ENCODE measurements at regions of chr17 and their contacts with region 1.

Region 1: DNA sequence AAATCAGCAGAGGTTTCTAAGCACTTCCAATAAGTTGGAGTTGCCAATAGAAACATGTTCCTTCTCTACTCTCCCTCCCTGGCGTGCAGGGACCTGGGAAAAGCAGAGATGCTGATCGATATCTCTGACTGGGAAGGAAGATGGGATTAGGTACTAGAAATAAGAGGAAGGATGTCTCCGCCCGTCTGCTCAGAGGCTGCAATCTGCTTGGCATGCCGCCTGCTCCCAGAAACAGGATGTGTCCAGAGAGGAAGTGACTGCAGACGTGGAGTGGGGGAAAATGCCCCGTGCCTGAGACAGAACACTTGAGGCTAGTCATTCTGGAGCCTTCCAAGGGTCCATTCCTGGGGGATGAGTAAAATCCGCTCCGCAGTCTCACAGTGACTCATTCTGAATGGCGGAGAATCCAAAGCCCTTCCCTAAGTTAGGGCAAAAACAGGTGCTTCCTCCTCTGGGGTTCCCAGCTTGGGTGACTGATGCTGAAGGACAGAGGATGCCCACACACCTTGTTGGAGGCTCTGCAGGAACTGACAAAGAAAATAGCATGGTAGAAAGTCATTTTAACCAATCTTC is 45.0 kb upstream of the SMURF2 start:
- DNase-seq: peak; percentile 100
- H3K4me3 ChIP-seq: no peak overlapping the region
- H3K27ac ChIP-seq: peak overlapping the region; percentile 99
- H3K4me1 ChIP-seq: peaks cover 44% of the 10 kb centered on the region
- H3K27me3 ChIP-seq: no peaks in the 10 kb centered on the region
- CTCF ChIP-seq: no peak
- POLR2A ChIP-seq: peak; percentile 62

Region 2: DNA sequence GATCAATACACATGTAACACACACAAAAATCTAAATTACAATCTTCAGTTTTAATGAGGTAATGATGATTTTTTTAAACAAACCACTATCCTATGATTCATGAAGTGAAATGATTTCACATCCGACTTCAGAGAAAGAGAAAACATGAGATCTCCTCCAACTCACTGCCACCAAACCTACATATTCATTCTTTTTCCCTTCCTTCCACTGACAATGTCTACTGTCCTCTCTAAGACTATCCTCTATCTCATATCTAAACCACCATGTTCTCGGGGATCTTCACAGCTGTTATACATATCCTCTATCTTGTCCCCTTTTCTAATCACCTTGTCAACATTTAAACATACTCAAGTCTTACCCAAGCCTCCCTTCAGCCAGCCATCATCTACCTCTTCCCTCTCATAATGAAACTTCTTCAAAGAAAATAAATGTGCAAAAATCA is 98.5 kb before region 1 on chr17:
- CTCF ChIA-PET with region 1: no interaction called
- POLR2A ChIA-PET with region 1: no interaction called
- dilution Hi-C with region 1: no loop called
- intact Hi-C with region 1: no loop called
- DNase-seq: peak; percentile 55
- H3K4me3 ChIP-seq: no peak overlapping the region
- H3K27ac ChIP-seq: peak overlapping the region; percentile 34
- H3K4me1 ChIP-seq: peaks cover 13% of the 10 kb centered on the region
- H3K27me3 ChIP-seq: no peaks in the 10 kb centered on the region
- CTCF ChIP-seq: no peak
- POLR2A ChIP-seq: peak; percentile 34

Region 3: GRCh38 chr17:64622931-64623654 is 84.0 kb before region 1 on chr17:
- CTCF ChIA-PET with region 1: no interaction called
- POLR2A ChIA-PET with region 1: no interaction called
- dilution Hi-C with region 1: no loop called
- intact Hi-C with region 1: loop called (anchors 1 kb)
- DNase-seq: peak; percentile 97
- H3K4me3 ChIP-seq: no peak overlapping the region
- H3K27ac ChIP-seq: peak overlapping the region; percentile 88
- H3K4me1 ChIP-seq: peaks cover 82% of the 10 kb centered on the region
- H3K27me3 ChIP-seq: no peaks in the 10 kb centered on the region
- CTCF ChIP-seq: no peak
- POLR2A ChIP-seq: no peak

Region 4: DNA sequence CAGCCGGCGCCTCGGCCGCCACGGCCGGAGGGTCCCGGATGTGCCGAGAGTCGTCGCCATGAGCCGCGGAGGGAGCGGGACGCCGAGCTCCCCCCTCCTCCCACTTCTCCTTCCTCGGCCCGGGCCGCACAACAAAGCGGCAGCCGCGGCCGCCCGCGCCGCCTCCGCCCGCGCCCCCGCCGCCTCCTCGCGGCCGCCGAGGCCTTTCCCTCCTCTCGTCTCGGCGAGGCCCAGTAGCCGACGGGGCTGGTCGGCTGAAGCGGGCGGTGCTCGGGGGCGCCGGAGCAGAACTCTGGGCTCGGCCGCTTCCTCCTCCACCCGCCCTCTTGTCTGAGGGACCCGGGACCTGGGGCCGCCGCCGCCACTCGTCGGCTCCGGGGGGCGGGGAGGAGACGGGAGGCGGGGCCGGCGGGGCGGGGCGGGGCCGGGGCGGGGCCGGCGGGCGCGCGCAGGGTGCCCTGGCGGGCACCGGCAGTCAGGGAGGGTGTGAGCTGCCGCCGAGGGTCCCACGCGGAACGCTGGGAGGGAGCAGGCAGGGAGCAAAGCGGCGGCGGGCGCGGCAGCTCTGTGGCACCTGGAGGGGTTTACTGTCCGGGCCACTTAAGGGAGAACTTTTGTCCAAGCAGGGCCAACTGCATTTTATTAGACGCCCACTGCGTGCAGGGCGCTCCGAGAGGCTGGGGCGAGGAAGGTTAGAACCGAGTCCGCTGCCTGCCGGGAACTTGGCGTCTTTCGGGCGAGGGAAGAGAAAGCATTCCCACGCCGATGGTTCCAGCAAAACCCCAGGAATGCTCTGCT is 44.9 kb before region 1 on chr17 and contains the start of gene SMURF2:
- CTCF ChIA-PET with region 1: interaction called, 15 read pairs
- POLR2A ChIA-PET with region 1: interaction called, 10 read pairs
- dilution Hi-C with region 1: no loop called
- intact Hi-C with region 1: loop called (anchors 1 kb)
- DNase-seq: peak; percentile 68
- H3K4me3 ChIP-seq: peak within 1 kb of the TSS; percentile 92 to 97 (median 95)
- H3K27ac ChIP-seq: peak within 1 kb of the TSS; percentile 86
- H3K4me1 ChIP-seq: peaks cover 29% of the 10 kb centered on the region
- H3K27me3 ChIP-seq: no peaks in the 10 kb centered on the region
- CTCF ChIP-seq: no peak
- POLR2A ChIP-seq: peak; percentile 97
- total RNA-seq, gene SMURF2: 105 and 108 TPM in 2 replicates

Region 5: DNA sequence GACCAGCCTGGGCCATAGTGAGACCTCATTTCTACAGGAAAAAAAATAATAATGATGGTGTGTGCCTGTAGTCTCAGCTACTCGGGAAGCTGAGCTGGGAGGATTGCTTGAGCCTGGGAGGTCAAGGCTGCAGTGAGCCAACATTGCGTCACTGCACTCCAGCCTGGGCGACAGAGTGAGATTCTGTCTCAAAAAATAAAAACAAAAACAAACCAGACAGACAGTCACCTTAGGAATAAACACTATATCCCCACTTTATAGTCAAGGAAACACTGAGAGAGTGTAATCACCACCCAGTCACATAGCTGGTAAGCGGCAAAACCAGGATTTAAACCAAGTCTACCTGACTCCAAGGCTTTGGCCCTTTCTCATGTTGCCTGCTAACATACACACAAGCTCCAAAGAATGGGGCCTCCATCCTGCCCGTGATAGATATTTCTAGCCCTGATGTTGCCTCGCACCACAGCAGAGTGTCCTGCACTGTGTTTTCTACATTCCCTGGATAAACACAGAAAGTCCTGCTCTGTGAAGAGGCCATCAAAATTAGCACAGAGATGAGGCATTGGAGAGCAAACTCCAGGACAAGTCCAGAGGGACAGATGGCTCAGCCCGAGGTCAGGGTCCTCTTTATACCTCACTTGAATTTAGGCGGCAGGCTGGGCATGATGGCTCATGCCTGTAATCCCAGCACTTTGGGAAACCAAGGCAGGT is 21.1 kb after region 1 on chr17:
- CTCF ChIA-PET with region 1: interaction called, 31 read pairs
- POLR2A ChIA-PET with region 1: interaction called, 8 read pairs
- dilution Hi-C with region 1: no loop called
- intact Hi-C with region 1: loop called (anchors 1 kb)
- DNase-seq: no peak
- H3K4me3 ChIP-seq: no peak overlapping the region
- H3K27ac ChIP-seq: peak overlapping the region; percentile 62
- H3K4me1 ChIP-seq: peaks cover 58% of the 10 kb centered on the region
- H3K27me3 ChIP-seq: no peaks in the 10 kb centered on the region
- CTCF ChIP-seq: no peak
- POLR2A ChIP-seq: no peak

Region 6: GRCh38 chr17:64781014-64781753 is 74.1 kb after region 1 on chr17:
- CTCF ChIA-PET with region 1: no interaction called
- POLR2A ChIA-PET with region 1: no interaction called
- dilution Hi-C with region 1: no loop called
- intact Hi-C with region 1: loop called (anchors 2 kb)
- DNase-seq: peak; percentile 51
- H3K4me3 ChIP-seq: peak overlapping the region; percentile 66 to 94 (median 73)
- H3K27ac ChIP-seq: peak overlapping the region; percentile 95
- H3K4me1 ChIP-seq: peaks cover 28% of the 10 kb centered on the region
- H3K27me3 ChIP-seq: no peaks in the 10 kb centered on the region
- CTCF ChIP-seq: no peak
- POLR2A ChIP-seq: peak; percentile 32

Region 7: DNA sequence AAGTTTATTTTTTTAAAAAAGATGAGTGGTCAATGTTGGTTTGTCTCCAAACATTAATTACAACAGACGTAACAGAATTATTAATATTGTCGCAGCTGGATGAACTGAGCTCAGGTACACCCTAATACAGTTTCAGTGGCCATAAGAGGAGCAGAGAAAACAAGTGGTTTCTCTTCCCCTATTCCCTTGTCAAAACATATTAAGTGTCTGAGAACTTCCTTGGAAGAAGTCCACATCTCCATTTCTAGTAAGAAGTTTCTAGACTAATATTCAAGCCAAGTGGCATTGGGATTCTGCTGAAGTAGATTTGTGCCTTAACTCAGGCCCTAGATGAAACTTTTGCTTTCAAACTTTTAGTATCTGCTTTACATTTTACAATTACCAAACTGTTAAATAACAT is 301.8 kb after region 1 on chr17:
- CTCF ChIA-PET with region 1: no interaction called
- POLR2A ChIA-PET with region 1: no interaction called
- dilution Hi-C with region 1: no loop called
- intact Hi-C with region 1: no loop called
- DNase-seq: no peak
- H3K4me3 ChIP-seq: no peak overlapping the region
- H3K27ac ChIP-seq: no peak overlapping the region
- H3K4me1 ChIP-seq: no peaks in the 10 kb centered on the region
- H3K27me3 ChIP-seq: no peaks in the 10 kb centered on the region
- CTCF ChIP-seq: no peak
- POLR2A ChIP-seq: no peak

Measured in endothelial cell of umbilical vein (primary cell).